PC-9 (cell line): ENCODE measurements at regions of chr19 and their contacts with region 1.

Region 1: GRCh38 chr19:43754503-43755255 is at the start of gene SMG9:
- DNase-seq: peak; percentile 84 to 98
- H3K4me3 ChIP-seq: peak within 1 kb of the TSS; percentile 99
- H3K27ac ChIP-seq: peak within 1 kb of the TSS; percentile 92
- H3K4me1 ChIP-seq: peaks cover 62% of the 10 kb centered on the region
- H3K27me3 ChIP-seq: no peaks in the 10 kb centered on the region
- CTCF ChIP-seq: no peak
- total RNA-seq, gene SMG9: 76.8 and 84.1 TPM in 2 replicates

Region 2: DNA sequence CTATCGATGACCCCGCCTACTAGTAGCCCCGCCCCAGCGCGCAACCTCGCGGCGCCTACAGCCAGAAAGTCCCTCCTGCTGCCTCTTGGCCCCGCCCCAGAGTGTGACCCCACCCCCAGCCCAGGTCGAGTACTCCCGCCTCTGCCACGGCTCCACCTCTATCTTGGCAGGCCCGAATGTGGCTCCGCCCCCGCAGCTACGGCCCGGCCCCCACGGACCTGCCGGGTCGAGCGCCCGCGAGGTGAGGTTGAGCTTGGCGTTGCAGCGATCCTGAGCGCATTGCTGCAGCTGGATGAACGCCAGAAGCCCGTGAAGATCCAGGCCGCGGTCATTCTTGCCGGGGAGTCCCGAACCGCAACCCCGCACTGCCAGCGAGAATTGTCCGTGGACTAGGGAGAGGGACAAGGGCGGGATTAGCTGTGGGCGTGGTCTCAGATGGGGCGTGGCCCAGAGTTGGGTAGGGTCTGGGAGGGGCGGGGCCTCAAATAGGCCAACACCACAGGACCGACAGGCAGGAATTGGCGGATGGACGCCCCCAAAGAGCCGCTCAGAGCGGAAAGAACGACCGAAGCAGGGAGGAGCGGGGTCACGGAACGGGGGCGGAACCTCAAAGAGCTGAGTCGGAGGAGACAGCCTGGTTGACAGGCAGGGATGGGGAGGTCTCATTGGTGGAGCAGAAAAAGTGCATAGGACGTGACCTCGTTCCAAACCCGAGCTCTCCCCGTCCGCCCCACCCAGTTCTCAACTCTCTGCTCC is 291.1 kb before region 1 on chr19:
- CTCF ChIA-PET with region 1: no interaction called
- POLR2A ChIA-PET with region 1: interaction called, 17 read pairs
- intact Hi-C with region 1: no loop called
- DNase-seq: peak; percentile 80 to 91
- H3K4me3 ChIP-seq: peak overlapping the region; percentile 80
- H3K27ac ChIP-seq: peak overlapping the region; percentile 63
- H3K4me1 ChIP-seq: peaks cover 32% of the 10 kb centered on the region
- H3K27me3 ChIP-seq: no peaks in the 10 kb centered on the region
- CTCF ChIP-seq: no peak

Region 3: GRCh38 chr19:43687660-43687997 is 67.0 kb before region 1 on chr19:
- CTCF ChIA-PET with region 1: interaction called, 4 read pairs
- POLR2A ChIA-PET with region 1: interaction called, 13 read pairs
- intact Hi-C with region 1: no loop called
- DNase-seq: peak in 1 of 2 experiments; percentile 39
- H3K4me3 ChIP-seq: no peak overlapping the region
- H3K27ac ChIP-seq: peak overlapping the region; percentile 31
- H3K4me1 ChIP-seq: peaks cover 23% of the 10 kb centered on the region
- H3K27me3 ChIP-seq: no peaks in the 10 kb centered on the region
- CTCF ChIP-seq: no peak

Region 4: DNA sequence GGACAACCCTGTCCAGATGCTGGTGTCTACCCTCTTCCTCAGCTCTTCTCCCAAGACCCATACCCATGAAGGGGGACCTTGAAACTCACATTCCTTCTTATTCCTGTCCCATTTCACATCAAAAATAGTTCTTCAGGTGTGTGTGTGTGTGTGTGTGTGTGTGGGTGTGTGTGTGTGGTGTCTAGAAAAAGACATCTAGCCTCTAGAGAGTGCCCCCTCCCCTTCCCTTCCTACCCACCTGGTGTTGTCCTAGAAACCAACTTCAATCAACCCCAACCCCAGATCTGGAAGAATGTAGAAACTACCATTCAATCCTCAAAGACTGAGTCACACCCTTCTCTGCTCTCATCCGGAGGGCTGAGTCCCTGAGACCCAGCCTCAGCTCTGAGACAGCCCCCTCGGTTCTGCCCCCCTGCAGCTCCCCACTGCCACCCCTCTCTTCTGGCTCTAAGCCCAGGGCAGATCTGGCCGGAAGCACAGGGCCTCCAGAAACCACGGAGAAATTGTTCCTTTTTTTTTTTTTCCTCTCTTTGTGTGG is 22.6 kb after region 1 on chr19:
- CTCF ChIA-PET with region 1: interaction called, 3 read pairs
- POLR2A ChIA-PET with region 1: interaction called, 5 read pairs
- intact Hi-C with region 1: loop called (anchors 1 kb)
- DNase-seq: peak; percentile 74 to 79
- H3K4me3 ChIP-seq: peak overlapping the region; percentile 62; the same call in 1 of the 2 replicates
- H3K27ac ChIP-seq: peak overlapping the region; percentile 88
- H3K4me1 ChIP-seq: peaks cover 42% of the 10 kb centered on the region
- H3K27me3 ChIP-seq: no peaks in the 10 kb centered on the region
- CTCF ChIP-seq: no peak

Region 5: GRCh38 chr19:43784981-43785808 is 30.5 kb after region 1 on chr19:
- CTCF ChIA-PET with region 1: interaction called, 3 read pairs
- POLR2A ChIA-PET with region 1: no interaction called
- intact Hi-C with region 1: loop called (anchors 2 kb)
- DNase-seq: peak; percentile 86 to 91
- H3K4me3 ChIP-seq: peak overlapping the region; percentile 16; the same call in 1 of the 2 replicates
- H3K27ac ChIP-seq: peak overlapping the region; percentile 70
- H3K4me1 ChIP-seq: peaks cover 43% of the 10 kb centered on the region
- H3K27me3 ChIP-seq: no peaks in the 10 kb centered on the region
- CTCF ChIP-seq: peak; percentile 97